Left colon (tissue), 2 donors: ENCODE measurements at regions of chr1 and their contacts with region 1.

Region 1: GRCh38 chr1:162391790-162392563 is 10.4 kb downstream of the C1orf226 start:
- DNase-seq: peak in 1 of 2 donors; percentile 34
- ATAC-seq: peak; percentile 62

Region 2: GRCh38 chr1:162056043-162056442 is 335.9 kb before region 1 on chr1:
- intact Hi-C with region 1: loop called (anchors 5 to 10 kb)
- DNase-seq: peak; percentile 48 to 67
- ATAC-seq: peak; percentile 99